ENCODE measurements at regions of chr15 and their contacts with region 1.

Region 1: GRCh38 chr15:74873036-74873755 is at the start of gene SCAMP2:
- DNase-seq: peak; percentile 90
- ATAC-seq: peak; percentile 93
- H3K4me3 Mint-ChIP-seq: peak within 1 kb of the TSS; percentile 90
- H3K27ac Mint-ChIP-seq: peak within 1 kb of the TSS; percentile 94
- H3K4me1 Mint-ChIP-seq: peaks cover 50% of the 10 kb centered on the region
- H3K27me3 Mint-ChIP-seq: no peaks in the 10 kb centered on the region
- CTCF ChIP-seq: no peak
- total RNA-seq, gene SCAMP2: 112 and 129 TPM in 2 replicates

Region 2: GRCh38 chr15:74540761-74541493 is 332.3 kb before region 1 on chr15 and contains the start of gene ARID3B:
- CTCF ChIA-PET with region 1: no interaction called
- POLR2A ChIA-PET with region 1: no interaction called
- intact Hi-C with region 1: loop called (anchors 2 kb)
- DNase-seq: peak; percentile 79
- ATAC-seq: peak; percentile 86
- H3K4me3 Mint-ChIP-seq: peak within 1 kb of the TSS; percentile 98
- H3K27ac Mint-ChIP-seq: peak within 1 kb of the TSS; percentile 95
- H3K4me1 Mint-ChIP-seq: peaks cover 49% of the 10 kb centered on the region
- H3K27me3 Mint-ChIP-seq: no peaks in the 10 kb centered on the region
- CTCF ChIP-seq: no peak
- total RNA-seq, gene ARID3B: 24.8 and 26.9 TPM in 2 replicates

Region 3: GRCh38 chr15:74781431-74782258 is 91.6 kb before region 1 on chr15 and contains the start of gene CSK:
- CTCF ChIA-PET with region 1: interaction called, 3 read pairs
- POLR2A ChIA-PET with region 1: interaction called, 10 read pairs
- intact Hi-C with region 1: no loop called
- DNase-seq: peak; percentile 90
- ATAC-seq: peak; percentile 42
- H3K4me3 Mint-ChIP-seq: peak within 1 kb of the TSS; percentile 94
- H3K27ac Mint-ChIP-seq: peak within 1 kb of the TSS; percentile 99
- H3K4me1 Mint-ChIP-seq: peaks cover 81% of the 10 kb centered on the region
- H3K27me3 Mint-ChIP-seq: no peaks in the 10 kb centered on the region
- CTCF ChIP-seq: no peak
- total RNA-seq, gene CSK: 540 and 557 TPM in 2 replicates

Region 4: GRCh38 chr15:74799268-74799855 is 73.8 kb before region 1 on chr15:
- CTCF ChIA-PET with region 1: no interaction called
- POLR2A ChIA-PET with region 1: no interaction called
- intact Hi-C with region 1: no loop called
- DNase-seq: no peak
- ATAC-seq: peak; percentile 15
- H3K4me3 Mint-ChIP-seq: peak overlapping the region; percentile 41
- H3K27ac Mint-ChIP-seq: peak overlapping the region; percentile 89
- H3K4me1 Mint-ChIP-seq: peaks cover 68% of the 10 kb centered on the region
- H3K27me3 Mint-ChIP-seq: no peaks in the 10 kb centered on the region
- CTCF ChIP-seq: no peak

Region 5: GRCh38 chr15:74857082-74857655 is 16.0 kb before region 1 on chr15:
- CTCF ChIA-PET with region 1: interaction called, 6 read pairs
- POLR2A ChIA-PET with region 1: interaction called, 35 read pairs
- intact Hi-C with region 1: loop called (anchors 1 kb)
- DNase-seq: no peak
- ATAC-seq: peak; percentile 72
- H3K4me3 Mint-ChIP-seq: peak overlapping the region; percentile 44
- H3K27ac Mint-ChIP-seq: peak overlapping the region; percentile 83
- H3K4me1 Mint-ChIP-seq: peaks cover 52% of the 10 kb centered on the region
- H3K27me3 Mint-ChIP-seq: no peaks in the 10 kb centered on the region
- CTCF ChIP-seq: no peak

Region 6: DNA sequence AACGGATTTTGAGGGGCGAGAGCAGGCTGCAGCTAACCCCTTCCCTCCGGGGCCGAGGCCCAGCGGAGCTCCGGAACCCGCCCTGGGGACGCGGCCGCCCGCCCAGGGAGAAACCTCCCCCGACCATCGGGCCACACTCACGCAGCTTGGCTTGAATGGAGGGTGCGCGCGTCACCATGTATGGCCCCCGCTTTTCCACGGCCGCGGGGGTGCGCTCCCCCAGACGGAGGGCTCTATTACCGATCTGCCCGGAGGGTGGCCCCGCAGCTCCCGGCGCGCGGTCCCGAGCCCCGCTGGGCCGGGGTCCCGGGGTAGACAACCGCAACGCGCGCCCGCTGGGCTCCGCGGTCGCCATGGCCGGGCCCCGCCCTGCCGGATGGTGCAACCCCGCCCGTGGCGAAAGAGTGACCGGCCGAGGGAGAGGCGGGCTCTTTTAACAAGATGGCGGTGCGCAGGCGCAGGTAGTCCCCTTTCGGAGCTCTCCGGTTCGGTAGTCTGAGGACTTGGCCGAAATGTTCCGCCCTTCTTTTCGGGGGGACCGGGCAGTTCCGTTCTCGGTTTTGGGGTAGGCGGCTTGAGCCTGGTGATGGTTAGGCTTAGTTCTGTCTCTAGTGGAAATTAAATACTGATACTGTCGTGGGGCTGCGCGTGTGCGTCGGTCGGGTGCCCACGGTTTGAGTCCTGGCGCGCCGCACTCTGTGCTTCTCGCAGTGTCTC is 33.4 kb after region 1 on chr15 and contains the start of gene FAM219B:
- CTCF ChIA-PET with region 1: interaction called, 18 read pairs
- POLR2A ChIA-PET with region 1: interaction called, 17 read pairs
- intact Hi-C with region 1: loop called (anchors 1 kb)
- DNase-seq: peak; percentile 77
- ATAC-seq: peak; percentile 92
- H3K4me3 Mint-ChIP-seq: peak within 1 kb of the TSS; percentile 98
- H3K27ac Mint-ChIP-seq: peak within 1 kb of the TSS; percentile 97
- H3K4me1 Mint-ChIP-seq: peaks cover 41% of the 10 kb centered on the region
- H3K27me3 Mint-ChIP-seq: no peaks in the 10 kb centered on the region
- CTCF ChIP-seq: no peak
- total RNA-seq, gene FAM219B: 76.0 and 90.4 TPM in 2 replicates

Region 7: DNA sequence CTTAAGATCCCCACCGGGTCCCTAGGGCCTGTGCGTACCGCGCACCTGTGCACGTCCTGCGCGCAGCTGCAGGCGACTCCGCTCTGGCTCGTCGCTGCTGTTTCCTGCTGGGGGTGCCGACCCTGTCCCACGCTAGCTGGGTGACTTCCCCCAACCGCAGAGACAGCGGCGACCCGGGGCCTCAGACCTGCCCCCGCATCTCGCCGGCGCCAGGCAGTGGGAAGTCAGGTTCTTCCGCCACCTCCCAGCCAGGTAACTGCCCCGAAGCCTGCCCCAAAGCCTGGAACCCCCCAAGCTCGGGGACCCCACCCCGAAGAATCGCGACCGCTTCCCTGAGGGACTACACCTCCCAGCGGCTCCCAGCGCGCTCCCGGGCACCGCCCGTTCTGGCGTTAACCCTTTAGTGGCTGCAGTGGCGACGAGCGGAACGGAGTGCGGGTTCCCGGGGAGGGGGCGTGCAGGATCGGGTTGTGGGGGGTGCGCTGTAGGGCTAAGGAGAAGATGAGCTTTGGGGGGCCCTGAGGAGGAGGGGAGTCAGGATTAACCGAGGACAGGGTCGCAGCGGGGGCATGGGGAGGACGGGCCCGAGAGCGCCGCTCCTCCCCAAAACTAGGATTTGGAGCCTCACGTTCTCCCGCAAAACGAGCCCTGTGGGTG is 474.2 kb after region 1 on chr15:
- CTCF ChIA-PET with region 1: no interaction called
- POLR2A ChIA-PET with region 1: interaction called, 10 read pairs
- intact Hi-C with region 1: no loop called
- DNase-seq: peak; percentile 69
- ATAC-seq: peak; percentile 77
- H3K4me3 Mint-ChIP-seq: peak overlapping the region; percentile 86
- H3K27ac Mint-ChIP-seq: peak overlapping the region; percentile 85
- H3K4me1 Mint-ChIP-seq: peaks cover 46% of the 10 kb centered on the region
- H3K27me3 Mint-ChIP-seq: peaks cover 1% of the 10 kb centered on the region
- CTCF ChIP-seq: no peak

Region 8: GRCh38 chr15:75759416-75760130 is 886.4 kb after region 1 on chr15:
- CTCF ChIA-PET with region 1: no interaction called
- POLR2A ChIA-PET with region 1: no interaction called
- intact Hi-C with region 1: no loop called
- DNase-seq: no peak
- ATAC-seq: no peak
- H3K4me3 Mint-ChIP-seq: peak overlapping the region; percentile 94
- H3K27ac Mint-ChIP-seq: peak overlapping the region; percentile 89
- H3K4me1 Mint-ChIP-seq: peaks cover 18% of the 10 kb centered on the region
- H3K27me3 Mint-ChIP-seq: no peaks in the 10 kb centered on the region
- CTCF ChIP-seq: no peak

Measured in activated B cell treated with CpG ODN at 0.5 μM for 24 hours (primary cell).